Activated CD4-positive, alpha-beta memory T cell treated with anti-CD3 and anti-CD28 coated beads for 36 hours (primary cell): ENCODE measurements at regions of chr2 and their contacts with region 1.

Region 1: GRCh38 chr2:149597668-149598326 is 10.2 kb upstream of the MMADHC start:
- DNase-seq: peak; percentile 56
- H3K4me3 Mint-ChIP-seq: peak overlapping the region; percentile 12
- H3K27ac Mint-ChIP-seq: peak overlapping the region; percentile 36
- H3K4me1 Mint-ChIP-seq: peaks cover 18% of the 10 kb centered on the region
- H3K27me3 Mint-ChIP-seq: peaks cover 12% of the 10 kb centered on the region

Region 2: DNA sequence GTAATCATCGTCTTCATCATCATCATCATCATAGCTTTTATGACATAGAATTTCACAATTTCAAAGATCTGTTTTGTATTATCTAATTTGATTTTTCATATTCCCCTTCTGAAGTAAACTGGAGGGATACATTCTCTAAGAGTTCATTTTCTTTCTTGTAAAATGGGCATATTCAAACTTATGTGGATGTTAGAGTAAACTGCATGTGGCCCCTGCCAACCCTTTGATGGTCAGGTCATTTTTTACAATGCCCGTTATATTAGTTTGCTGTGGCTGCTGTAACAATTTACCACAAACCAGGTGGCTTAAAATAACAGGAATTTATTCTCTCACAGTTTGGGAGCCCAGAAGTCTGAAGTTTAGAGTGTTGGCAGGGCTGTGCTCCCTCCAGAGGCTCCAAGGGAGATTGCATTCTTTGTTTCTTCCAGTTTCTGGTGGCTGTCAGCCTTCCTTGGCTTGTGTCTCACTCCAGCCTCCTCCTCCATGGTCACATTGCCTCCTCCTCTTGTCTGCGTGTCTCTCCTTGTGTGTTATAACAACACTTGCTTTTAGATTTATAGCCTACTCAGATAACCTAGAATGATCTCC is 117.3 kb after region 1 on chr2:
- CTCF ChIA-PET with region 1: no interaction called
- POLR2A ChIA-PET with region 1: no interaction called
- intact Hi-C with region 1: loop called (anchors 1 kb)
- DNase-seq: no peak
- H3K4me3 Mint-ChIP-seq: no peak overlapping the region
- H3K27ac Mint-ChIP-seq: no peak overlapping the region
- H3K4me1 Mint-ChIP-seq: no peaks in the 10 kb centered on the region
- H3K27me3 Mint-ChIP-seq: peaks cover 4% of the 10 kb centered on the region

Region 3: DNA sequence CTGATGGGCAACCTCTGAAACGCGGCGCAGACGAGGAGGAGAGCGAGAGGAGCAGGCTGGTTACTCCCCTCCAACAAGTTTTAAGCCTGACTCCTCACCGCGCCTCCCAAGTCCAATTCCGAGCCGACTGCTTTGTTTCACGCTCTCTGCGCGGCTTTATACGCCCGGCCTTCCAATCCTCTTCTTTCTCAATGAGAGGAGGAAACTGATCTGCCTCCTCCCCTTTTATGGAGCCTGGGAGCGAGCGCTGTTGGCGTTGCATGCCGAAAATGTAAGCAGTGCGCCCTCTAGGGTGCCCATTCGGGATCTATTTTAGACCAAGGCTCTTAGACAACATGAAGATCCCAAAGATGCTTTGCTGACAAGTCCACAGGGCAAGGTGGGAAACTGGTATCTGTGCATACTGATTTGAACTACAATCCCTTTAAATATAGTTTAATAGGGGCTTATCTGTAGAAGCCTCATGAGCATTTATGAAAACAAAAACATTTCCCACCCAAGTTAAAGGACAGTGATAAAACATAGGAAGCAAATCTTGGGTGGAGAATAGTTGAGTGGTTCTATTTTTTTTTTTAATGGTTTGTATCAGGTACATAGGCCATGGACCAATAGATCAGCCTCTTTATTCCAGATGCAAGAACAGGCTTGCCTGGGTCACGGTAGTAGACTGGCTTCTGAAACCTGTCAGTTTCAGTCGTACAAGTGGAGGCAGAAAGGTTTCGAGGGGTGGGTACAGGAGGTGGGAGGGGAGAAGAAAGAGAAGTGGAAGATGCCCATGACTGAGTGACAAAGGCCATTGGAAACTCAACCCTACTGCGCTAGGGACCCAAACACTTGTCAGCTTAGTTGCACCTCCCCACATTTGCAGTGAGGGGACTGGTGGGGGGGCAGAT is 890.0 kb after region 1 on chr2 and contains the start of gene RND3:
- CTCF ChIA-PET with region 1: interaction called, 3 read pairs
- POLR2A ChIA-PET with region 1: no interaction called
- intact Hi-C with region 1: loop called (anchors 1 kb)
- DNase-seq: peak; percentile 70
- H3K4me3 Mint-ChIP-seq: peak within 1 kb of the TSS; percentile 29
- H3K27ac Mint-ChIP-seq: no peak within 1 kb of the TSS
- H3K4me1 Mint-ChIP-seq: peaks cover 10% of the 10 kb centered on the region
- H3K27me3 Mint-ChIP-seq: peaks cover 55% of the 10 kb centered on the region
- total RNA-seq, gene RND3: not detected

Region 4: GRCh38 chr2:151051574-151052220 is 1453.9 kb after region 1 on chr2:
- CTCF ChIA-PET with region 1: interaction called, 36 read pairs
- POLR2A ChIA-PET with region 1: no interaction called
- intact Hi-C with region 1: loop called (anchors 1 kb)
- DNase-seq: peak; percentile 12
- H3K4me3 Mint-ChIP-seq: no peak overlapping the region
- H3K27ac Mint-ChIP-seq: no peak overlapping the region
- H3K4me1 Mint-ChIP-seq: peaks cover 5% of the 10 kb centered on the region
- H3K27me3 Mint-ChIP-seq: peaks cover 4% of the 10 kb centered on the region

Region 5: DNA sequence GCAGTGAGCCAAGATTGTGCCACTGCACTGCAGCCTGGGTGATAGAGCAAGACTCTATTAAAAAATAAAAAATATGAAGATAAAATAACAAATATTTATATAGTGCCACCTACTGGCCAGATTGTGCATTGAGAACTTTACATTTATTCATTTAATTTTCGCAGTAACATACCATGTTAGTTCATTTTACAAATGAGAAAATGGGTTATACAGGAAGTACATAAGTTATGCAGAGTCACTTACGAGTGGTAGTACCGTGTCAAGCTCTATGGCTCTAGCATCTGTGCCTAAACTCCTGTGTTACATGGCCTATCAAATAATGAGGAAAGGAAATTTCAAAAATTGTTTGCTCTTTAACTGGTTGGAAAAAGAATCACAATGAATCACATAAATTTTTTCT is 1839.8 kb after region 1 on chr2:
- CTCF ChIA-PET with region 1: no interaction called
- POLR2A ChIA-PET with region 1: no interaction called
- intact Hi-C with region 1: loop called (anchors 10 kb)
- DNase-seq: no peak
- H3K4me3 Mint-ChIP-seq: no peak overlapping the region
- H3K27ac Mint-ChIP-seq: no peak overlapping the region
- H3K4me1 Mint-ChIP-seq: no peaks in the 10 kb centered on the region
- H3K27me3 Mint-ChIP-seq: no peaks in the 10 kb centered on the region